CD8-positive, alpha-beta T cell (primary cell): ENCODE measurements at regions of chr12 and their contacts with region 1.

Region 1: GRCh38 chr12:113310489-113310888 is 24.4 kb downstream of the SLC8B1 start:
- DNase-seq: no peak
- ATAC-seq: no peak
- H3K4me3 ChIP-seq: no peak overlapping the region
- H3K4me3 Mint-ChIP-seq: no peak overlapping the region
- H3K27ac ChIP-seq: no peak overlapping the region
- H3K27ac Mint-ChIP-seq: peak overlapping the region; percentile 33
- H3K4me1 ChIP-seq: no peaks in the 10 kb centered on the region
- H3K4me1 Mint-ChIP-seq: no peaks in the 10 kb centered on the region
- H3K27me3 ChIP-seq: no peaks in the 10 kb centered on the region
- H3K27me3 Mint-ChIP-seq: no peaks in the 10 kb centered on the region
- CTCF ChIP-seq: no peak

Region 2: GRCh38 chr12:113293100-113293499 is 17.4 kb before region 1 on chr12:
- CTCF ChIA-PET with region 1: no interaction called
- POLR2A ChIA-PET with region 1: no interaction called
- intact Hi-C with region 1: no loop called
- DNase-seq: no peak
- ATAC-seq: no peak
- H3K4me3 ChIP-seq: no peak overlapping the region
- H3K4me3 Mint-ChIP-seq: no peak overlapping the region
- H3K27ac ChIP-seq: no peak overlapping the region
- H3K27ac Mint-ChIP-seq: peak overlapping the region; percentile 37
- H3K4me1 ChIP-seq: no peaks in the 10 kb centered on the region
- H3K4me1 Mint-ChIP-seq: no peaks in the 10 kb centered on the region
- H3K27me3 ChIP-seq: no peaks in the 10 kb centered on the region
- H3K27me3 Mint-ChIP-seq: no peaks in the 10 kb centered on the region
- CTCF ChIP-seq: no peak

Region 3: GRCh38 chr12:113422030-113422885 is 111.8 kb after region 1 on chr12 and contains the start of gene SDSL:
- CTCF ChIA-PET with region 1: interaction called, 7 read pairs
- POLR2A ChIA-PET with region 1: no interaction called
- intact Hi-C with region 1: loop called in 1 of 2 experiments (anchors 1 kb)
- DNase-seq: peak in 1 of 9 experiments; percentile 38
- ATAC-seq: no peak
- H3K4me3 ChIP-seq: no peak within 1 kb of the TSS
- H3K4me3 Mint-ChIP-seq: no peak within 1 kb of the TSS
- H3K27ac ChIP-seq: no peak within 1 kb of the TSS
- H3K27ac Mint-ChIP-seq: no peak within 1 kb of the TSS
- H3K4me1 ChIP-seq: no peaks in the 10 kb centered on the region
- H3K4me1 Mint-ChIP-seq: no peaks in the 10 kb centered on the region
- H3K27me3 ChIP-seq: no peaks in the 10 kb centered on the region
- H3K27me3 Mint-ChIP-seq: peaks cover 8% of the 10 kb centered on the region
- CTCF ChIP-seq: no peak
- total RNA-seq, gene SDSL: not detected

Region 4: GRCh38 chr12:113569806-113570205 is 259.3 kb after region 1 on chr12:
- CTCF ChIA-PET with region 1: no interaction called
- POLR2A ChIA-PET with region 1: no interaction called
- intact Hi-C with region 1: loop called in 1 of 2 experiments (anchors 10 kb)
- DNase-seq: no peak
- ATAC-seq: no peak
- H3K4me3 ChIP-seq: no peak overlapping the region
- H3K4me3 Mint-ChIP-seq: no peak overlapping the region
- H3K27ac ChIP-seq: no peak overlapping the region
- H3K27ac Mint-ChIP-seq: no peak overlapping the region
- H3K4me1 ChIP-seq: no peaks in the 10 kb centered on the region
- H3K4me1 Mint-ChIP-seq: no peaks in the 10 kb centered on the region
- H3K27me3 ChIP-seq: no peaks in the 10 kb centered on the region
- H3K27me3 Mint-ChIP-seq: peaks cover 22% of the 10 kb centered on the region
- CTCF ChIP-seq: no peak

Region 5: GRCh38 chr12:113788020-113788856 is 477.7 kb after region 1 on chr12:
- CTCF ChIA-PET with region 1: no interaction called
- POLR2A ChIA-PET with region 1: no interaction called
- intact Hi-C with region 1: no loop called
- DNase-seq: no peak
- ATAC-seq: no peak
- H3K4me3 ChIP-seq: no peak overlapping the region
- H3K4me3 Mint-ChIP-seq: no peak overlapping the region
- H3K27ac ChIP-seq: no peak overlapping the region
- H3K27ac Mint-ChIP-seq: no peak overlapping the region
- H3K4me1 ChIP-seq: no peaks in the 10 kb centered on the region
- H3K4me1 Mint-ChIP-seq: no peaks in the 10 kb centered on the region
- H3K27me3 ChIP-seq: peaks cover 0 to 3% of the 10 kb centered on the region in 2 experiments
- H3K27me3 Mint-ChIP-seq: no peaks in the 10 kb centered on the region
- CTCF ChIP-seq: no peak

Region 6: GRCh38 chr12:113912760-113913329 is 602.4 kb after region 1 on chr12:
- CTCF ChIA-PET with region 1: no interaction called
- POLR2A ChIA-PET with region 1: no interaction called
- intact Hi-C with region 1: loop called in 1 of 2 experiments (anchors 2 kb)
- DNase-seq: peak in 8 of 9 experiments; percentile 14 to 60 (median 48)
- ATAC-seq: peak; percentile 31
- H3K4me3 ChIP-seq: no peak overlapping the region
- H3K4me3 Mint-ChIP-seq: no peak overlapping the region
- H3K27ac ChIP-seq: no peak overlapping the region
- H3K27ac Mint-ChIP-seq: no peak overlapping the region
- H3K4me1 ChIP-seq: no peaks in the 10 kb centered on the region
- H3K4me1 Mint-ChIP-seq: no peaks in the 10 kb centered on the region
- H3K27me3 ChIP-seq: no peaks in the 10 kb centered on the region
- H3K27me3 Mint-ChIP-seq: no peaks in the 10 kb centered on the region
- CTCF ChIP-seq: peak; percentile 69